ENCODE measurements at regions of chr2 and their contacts with region 1.

Region 1: DNA sequence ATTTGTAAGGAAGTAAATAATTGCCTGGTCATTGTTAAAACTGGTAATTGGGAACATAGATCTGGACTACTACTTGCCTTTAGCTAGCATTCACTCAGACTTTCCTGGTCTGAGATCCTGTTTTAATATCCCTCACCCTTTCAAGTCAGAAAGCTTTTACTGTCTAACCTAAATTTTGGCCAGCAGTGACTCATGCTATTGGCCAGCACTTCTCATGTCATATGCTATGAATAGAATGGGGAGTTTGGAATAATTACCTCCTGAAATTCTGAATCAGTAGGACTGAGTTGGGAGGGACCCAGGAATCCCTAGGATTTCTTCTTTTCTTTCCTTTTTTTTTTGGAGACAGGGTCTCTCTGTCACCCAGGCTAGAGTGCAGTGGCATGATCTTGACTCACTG is 19.3 kb downstream of the STK36 start:
- DNase-seq: no peak
- H3K4me3 ChIP-seq: no peak overlapping the region
- H3K27ac ChIP-seq: no peak overlapping the region
- H3K4me1 ChIP-seq: no peaks in the 10 kb centered on the region
- H3K27me3 ChIP-seq: no peaks in the 10 kb centered on the region
- CTCF ChIP-seq: no peak

Region 2: GRCh38 chr2:218607436-218608115 is 83.7 kb before region 1 on chr2 and contains the start of gene PLCD4:
- CTCF ChIA-PET with region 1: no interaction called
- dilution Hi-C with region 1: loop called (anchors 5 kb)
- in situ Hi-C with region 1: no loop called
- intact Hi-C with region 1: no loop called
- DNase-seq: peak; percentile 94
- H3K4me3 ChIP-seq: peak within 1 kb of the TSS; percentile 0 to 37 (median 33)
- H3K27ac ChIP-seq: peak within 1 kb of the TSS; percentile 47
- H3K4me1 ChIP-seq: peaks cover 18% of the 10 kb centered on the region
- H3K27me3 ChIP-seq: no peaks in the 10 kb centered on the region
- CTCF ChIP-seq: peak in 1 of 2 donors; percentile 16
- total RNA-seq, gene PLCD4: 1.8 to 5.4 TPM

Region 3: GRCh38 chr2:218671654-218672566 is 19.3 kb before region 1 on chr2 and contains the starts of genes RNF25 and STK36:
- CTCF ChIA-PET with region 1: no interaction called
- dilution Hi-C with region 1: no loop called
- in situ Hi-C with region 1: no loop called
- intact Hi-C with region 1: loop called (anchors 2 kb)
- DNase-seq: peak; percentile 78
- H3K4me3 ChIP-seq: peak within 1 kb of the TSS; percentile 60 to 97 (median 74)
- H3K27ac ChIP-seq: peak within 1 kb of the TSS; percentile 82
- H3K4me1 ChIP-seq: peaks cover 3% of the 10 kb centered on the region
- H3K27me3 ChIP-seq: no peaks in the 10 kb centered on the region
- CTCF ChIP-seq: no peak
- total RNA-seq, gene RNF25: 33.5 to 47.1 TPM
- total RNA-seq, gene STK36: 18.8 to 26.4 TPM

Region 4: DNA sequence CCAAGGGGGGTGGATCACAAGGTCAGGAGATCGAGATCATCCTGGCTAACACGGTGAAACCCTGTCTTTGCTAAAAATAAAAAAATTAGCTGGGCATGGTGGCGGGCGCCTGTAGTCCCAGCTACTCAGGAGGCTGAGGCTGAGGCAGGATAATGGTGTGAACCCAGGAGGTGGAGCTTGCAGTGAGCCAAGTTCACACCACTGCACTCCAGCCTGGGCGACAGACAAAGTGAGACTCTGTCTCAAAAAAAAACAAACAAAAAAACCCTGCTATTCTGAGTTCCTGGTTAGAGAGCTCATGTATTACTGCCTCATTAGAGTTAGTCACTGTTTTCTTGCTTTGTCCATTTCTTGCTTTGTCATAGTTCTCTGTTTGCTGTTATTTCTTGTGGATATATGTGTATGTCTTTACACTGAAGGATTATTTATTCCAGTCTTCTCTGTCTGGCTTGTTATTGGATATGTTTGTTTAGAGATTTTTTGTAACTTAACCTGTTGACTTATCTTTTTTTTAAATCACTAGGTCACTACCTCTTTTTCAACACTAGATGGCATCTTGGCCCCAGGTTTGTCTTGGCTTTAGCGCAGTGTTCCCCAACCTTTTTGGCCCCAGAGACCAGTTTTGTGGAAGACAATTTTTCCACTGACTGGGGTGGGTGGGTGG is 36.4 kb after region 1 on chr2:
- CTCF ChIA-PET with region 1: no interaction called
- dilution Hi-C with region 1: no loop called
- in situ Hi-C with region 1: no loop called
- intact Hi-C with region 1: loop called (anchors 1 kb)
- DNase-seq: peak; percentile 41
- H3K4me3 ChIP-seq: no peak overlapping the region
- H3K27ac ChIP-seq: no peak overlapping the region
- H3K4me1 ChIP-seq: peaks cover 20% of the 10 kb centered on the region
- H3K27me3 ChIP-seq: no peaks in the 10 kb centered on the region
- CTCF ChIP-seq: peak; percentile 50 to 60

Measured in mammary epithelial cell (primary cell).